ENCODE measurements at regions of chr10 and their contacts with region 1.

Region 1: GRCh38 chr10:36872702-36873393 is 252.6 kb upstream of the ANKRD30A start:
- DNase-seq: no peak
- CTCF ChIP-seq: no peak

Region 2: DNA sequence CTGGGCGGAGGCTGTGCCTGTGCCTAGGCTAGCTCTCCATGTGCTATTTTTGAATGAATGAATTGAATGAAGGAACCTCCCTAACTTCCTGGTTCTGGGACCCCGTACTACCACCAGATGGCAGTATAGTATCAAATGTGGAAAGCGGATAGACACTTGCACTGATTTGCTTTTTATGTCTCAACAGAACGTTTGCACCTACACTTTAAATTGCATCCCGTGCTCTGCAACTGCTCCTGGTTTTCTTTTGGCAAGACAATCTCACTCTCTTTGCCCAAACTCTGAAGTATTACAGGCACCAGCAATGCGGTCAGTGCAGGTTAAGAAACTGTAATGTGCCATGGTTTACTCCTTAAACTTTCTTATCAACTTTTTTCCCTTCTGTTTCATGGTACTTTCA is 1237.3 kb before region 1 on chr10:
- in situ Hi-C with region 1: loop called (anchors 5 kb)
- DNase-seq: peak; percentile 60
- CTCF ChIP-seq: peak; percentile 70

Measured in GM13976 (cell line).